ENCODE measurements at regions of chrX and their contacts with region 1.

Region 1: GRCh38 chrX:15143050-15143824 is 126.6 kb downstream of the ASB9 start:
- DNase-seq: peak; percentile 75
- ATAC-seq: peak; percentile 88
- H3K4me3 ChIP-seq: no peak overlapping the region
- H3K27ac ChIP-seq: no peak overlapping the region
- H3K4me1 ChIP-seq: no peaks in the 10 kb centered on the region
- H3K27me3 ChIP-seq: no peaks in the 10 kb centered on the region
- CTCF ChIP-seq: peak; percentile 90

Region 2: DNA sequence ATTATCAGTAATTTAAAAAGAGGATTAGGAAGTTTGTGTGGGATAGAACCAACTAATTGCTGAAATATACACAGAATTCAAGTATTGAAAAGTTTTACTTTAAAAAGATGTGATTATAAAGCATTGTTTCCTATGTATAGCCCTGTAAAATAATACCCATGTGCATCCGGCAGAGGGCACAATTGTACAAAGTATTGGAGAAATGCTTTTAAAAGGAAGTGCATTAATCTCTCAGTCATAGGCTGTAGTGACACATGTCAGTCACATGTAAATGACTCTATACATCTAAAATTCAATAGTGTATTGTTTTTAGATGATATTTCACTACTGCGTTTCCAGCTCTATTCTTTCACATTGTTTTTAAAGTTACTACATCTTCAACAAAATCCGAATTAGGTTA is 1103.9 kb before region 1 on chrX:
- CTCF ChIA-PET with region 1: interaction called, 4 read pairs
- POLR2A ChIA-PET with region 1: no interaction called
- intact Hi-C with region 1: loop called (anchors 5 kb)
- DNase-seq: peak; percentile 76
- ATAC-seq: peak; percentile 83
- H3K4me3 ChIP-seq: no peak overlapping the region
- H3K27ac ChIP-seq: no peak overlapping the region
- H3K4me1 ChIP-seq: no peaks in the 10 kb centered on the region
- H3K27me3 ChIP-seq: no peaks in the 10 kb centered on the region
- CTCF ChIP-seq: peak; percentile 76

Region 3: DNA sequence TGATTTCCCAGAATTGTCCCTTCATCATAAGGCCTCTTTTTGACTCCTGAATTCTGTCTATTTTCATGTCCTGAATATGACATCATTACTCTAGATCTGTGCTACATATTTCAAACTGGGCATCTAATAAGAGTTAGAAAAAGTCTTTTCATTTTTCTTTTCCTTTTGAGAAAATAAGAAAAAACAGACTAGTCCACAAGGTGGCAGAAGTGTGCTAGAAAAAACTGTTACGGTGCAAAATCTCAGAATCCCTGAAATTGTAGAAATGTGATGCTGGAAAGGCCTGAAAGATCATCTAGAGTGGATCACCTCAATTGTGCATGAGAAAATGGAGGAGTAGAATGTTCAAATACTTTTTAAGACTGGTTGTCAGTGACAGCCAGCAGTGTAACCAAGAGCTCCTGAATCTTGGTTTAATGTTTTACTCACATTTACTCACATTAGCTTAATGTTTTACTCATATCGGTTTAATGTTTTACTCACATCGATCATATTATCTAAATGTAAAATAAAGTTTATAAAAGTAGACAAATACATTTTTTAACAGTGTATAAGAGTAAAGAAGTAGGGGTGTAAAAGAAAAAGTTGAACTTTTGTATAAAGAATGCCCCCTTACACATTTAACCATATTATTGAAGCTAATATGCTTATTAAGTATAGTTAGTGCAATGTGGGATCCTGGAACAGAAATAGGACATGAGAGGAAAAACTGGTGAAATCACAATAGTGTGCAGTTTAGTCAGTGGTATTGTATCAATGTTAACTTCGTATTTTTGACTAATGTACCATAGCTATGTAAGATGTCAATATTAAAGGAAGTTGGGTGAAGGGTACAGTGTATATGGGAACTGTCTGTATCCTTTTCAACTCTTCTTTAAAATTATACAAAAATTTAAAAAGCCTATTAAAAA is 157.0 kb after region 1 on chrX:
- CTCF ChIA-PET with region 1: no interaction called
- POLR2A ChIA-PET with region 1: no interaction called
- intact Hi-C with region 1: no loop called
- DNase-seq: peak; percentile 58
- ATAC-seq: no peak; the same call in 1 of the 2 replicates
- H3K4me3 ChIP-seq: no peak overlapping the region
- H3K27ac ChIP-seq: no peak overlapping the region
- H3K4me1 ChIP-seq: no peaks in the 10 kb centered on the region
- H3K27me3 ChIP-seq: no peaks in the 10 kb centered on the region
- CTCF ChIP-seq: peak; percentile 71